Activated CD4-positive, alpha-beta T cell treated with anti-CD3 and anti-CD28 coated beads, Interleukin-2, amount 10 ng/mL, durations not matched to agents 24 days and 14 days (primary cell): ENCODE measurements at regions of chr20 and their contacts with region 1.

Region 1: DNA sequence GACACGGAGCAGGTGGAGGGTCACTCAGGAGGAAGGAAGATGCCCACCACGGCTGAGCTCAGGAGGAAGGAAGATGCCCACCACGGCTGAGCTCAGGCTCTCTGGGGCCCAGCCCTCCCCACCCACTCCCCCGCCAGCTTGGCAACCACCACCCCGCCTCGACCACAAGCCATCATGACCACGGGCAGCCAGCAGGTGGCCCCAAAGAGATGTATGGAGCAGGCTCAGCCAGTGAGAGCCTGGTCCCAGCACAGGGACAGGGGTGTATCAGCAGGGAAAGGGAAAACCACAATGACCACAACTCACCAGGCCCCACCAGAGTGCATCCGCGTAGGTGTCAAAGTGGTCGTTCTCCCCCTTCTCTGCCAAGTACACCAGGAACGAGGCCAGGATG is 30.4 kb downstream of the KCNQ2 start:
- DNase-seq: peak; percentile 86
- H3K4me3 Mint-ChIP-seq: peak overlapping the region; percentile 23
- H3K27ac Mint-ChIP-seq: peak overlapping the region; percentile 67
- H3K4me1 Mint-ChIP-seq: peaks cover 15% of the 10 kb centered on the region
- H3K27me3 Mint-ChIP-seq: peaks cover 2% of the 10 kb centered on the region

Region 2: GRCh38 chr20:63134201-63134612 is 307.9 kb before region 1 on chr20:
- intact Hi-C with region 1: no loop called
- DNase-seq: no peak
- H3K4me3 Mint-ChIP-seq: no peak overlapping the region
- H3K27ac Mint-ChIP-seq: no peak overlapping the region
- H3K4me1 Mint-ChIP-seq: no peaks in the 10 kb centered on the region
- H3K27me3 Mint-ChIP-seq: peaks cover 2% of the 10 kb centered on the region

Region 3: DNA sequence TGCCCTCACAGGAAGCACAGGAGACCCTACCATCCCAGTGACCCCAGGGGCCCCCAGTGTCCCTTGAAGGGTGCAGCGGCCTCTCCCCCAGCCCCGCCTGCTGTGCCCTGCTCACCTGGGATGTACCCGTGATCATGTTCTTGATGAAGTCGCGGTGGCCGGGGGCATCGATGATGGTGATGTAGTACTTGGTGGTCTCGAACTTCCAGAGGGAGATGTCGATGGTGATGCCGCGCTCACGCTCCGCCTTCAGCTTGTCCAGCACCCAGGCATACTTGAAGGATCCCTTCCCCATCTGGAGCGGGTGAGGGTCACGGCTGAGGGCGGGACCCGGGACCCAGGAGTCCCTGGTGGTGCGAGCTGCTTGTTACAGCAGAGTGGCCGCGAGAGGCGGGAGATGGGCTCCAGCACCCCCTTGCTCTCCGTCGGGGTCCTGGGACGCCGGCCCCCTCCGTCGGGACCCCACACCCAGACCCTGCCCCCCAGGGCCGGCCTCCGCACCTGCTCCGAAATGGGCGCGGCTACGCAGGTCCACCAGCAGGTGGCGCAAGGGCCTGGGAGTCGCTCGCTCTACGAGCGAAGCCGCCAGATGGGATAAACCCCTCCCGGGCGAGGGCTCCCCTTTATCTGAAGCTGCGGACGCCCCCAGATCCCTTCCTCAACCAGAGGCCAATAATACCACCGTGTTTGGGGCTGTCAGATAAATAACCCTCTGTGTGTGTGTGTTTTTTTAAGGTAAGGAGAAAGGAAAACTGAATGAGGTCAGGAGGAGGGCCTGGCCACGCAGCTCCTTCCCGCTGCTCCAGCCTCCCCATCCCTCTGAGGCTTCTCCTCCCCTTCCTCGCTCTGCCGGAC is 53.9 kb after region 1 on chr20:
- intact Hi-C with region 1: loop called (anchors 5 kb)
- DNase-seq: peak; percentile 91
- H3K4me3 Mint-ChIP-seq: peak overlapping the region; percentile 64
- H3K27ac Mint-ChIP-seq: no peak overlapping the region
- H3K4me1 Mint-ChIP-seq: peaks cover 2% of the 10 kb centered on the region
- H3K27me3 Mint-ChIP-seq: peaks cover 22% of the 10 kb centered on the region